Activated CD4-positive, alpha-beta memory T cell treated with anti-CD3 and anti-CD28 coated beads for 36 hours (primary cell): ENCODE measurements at regions of chr10 and their contacts with region 1.

Region 1: GRCh38 chr10:96586419-96587263 is at the start of gene TM9SF3:
- DNase-seq: peak; percentile 95
- H3K4me3 Mint-ChIP-seq: peak within 1 kb of the TSS; percentile 97
- H3K27ac Mint-ChIP-seq: peak within 1 kb of the TSS; percentile 95
- H3K4me1 Mint-ChIP-seq: peaks cover 33% of the 10 kb centered on the region
- H3K27me3 Mint-ChIP-seq: peaks cover 6% of the 10 kb centered on the region
- total RNA-seq, gene TM9SF3: 75.6 to 79.7 TPM

Region 2: DNA sequence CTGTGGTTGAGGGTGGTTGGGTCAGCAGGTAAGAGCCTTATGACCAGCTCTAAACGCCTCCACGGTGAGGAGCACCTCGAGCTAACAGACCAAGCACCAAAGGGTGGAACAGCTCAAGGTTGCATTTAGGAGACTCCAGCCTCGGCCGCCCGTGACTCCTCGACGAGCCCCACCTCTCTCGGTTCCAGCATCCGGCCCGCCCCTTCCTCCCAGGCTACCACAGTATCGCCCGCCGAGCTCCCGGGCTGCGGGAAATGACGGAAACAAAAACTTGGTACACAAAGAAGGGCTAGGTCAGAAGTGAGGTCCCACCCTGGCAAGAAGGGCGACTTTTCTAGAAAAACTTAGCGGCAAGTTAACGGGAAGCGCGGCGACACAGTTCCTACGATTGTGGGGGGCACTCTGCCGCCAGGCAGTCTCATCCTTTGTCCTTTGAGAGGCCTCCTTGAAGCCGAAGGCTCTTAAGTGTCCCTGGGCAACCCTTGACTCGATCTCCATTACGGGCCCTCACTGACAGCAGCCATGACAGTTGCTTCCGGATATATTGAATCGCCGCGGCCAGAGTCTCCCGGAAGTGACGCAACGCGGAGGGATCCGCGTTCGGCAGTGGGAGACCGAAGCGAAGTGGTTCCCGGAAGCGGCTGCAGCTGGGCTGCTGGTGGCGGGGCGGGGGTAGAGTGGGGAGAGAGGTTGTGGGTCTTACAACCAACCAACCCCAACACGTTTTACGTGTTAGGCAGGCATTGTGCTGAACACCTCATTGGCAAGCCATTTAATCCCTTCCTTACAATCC is 496.8 kb before region 1 on chr10:
- CTCF ChIA-PET with region 1: no interaction called
- POLR2A ChIA-PET with region 1: no interaction called
- intact Hi-C with region 1: loop called (anchors 5 kb)
- DNase-seq: peak; percentile 95
- H3K4me3 Mint-ChIP-seq: peak overlapping the region; percentile 95
- H3K27ac Mint-ChIP-seq: peak overlapping the region; percentile 99
- H3K4me1 Mint-ChIP-seq: peaks cover 12% of the 10 kb centered on the region
- H3K27me3 Mint-ChIP-seq: peaks cover 15% of the 10 kb centered on the region

Region 3: GRCh38 chr10:96565774-96566173 is 20.9 kb before region 1 on chr10:
- CTCF ChIA-PET with region 1: interaction called, 4 read pairs
- POLR2A ChIA-PET with region 1: interaction called, 3 read pairs
- intact Hi-C with region 1: loop called (anchors 2 kb)
- DNase-seq: no peak
- H3K4me3 Mint-ChIP-seq: no peak overlapping the region
- H3K27ac Mint-ChIP-seq: no peak overlapping the region
- H3K4me1 Mint-ChIP-seq: peaks cover 35% of the 10 kb centered on the region
- H3K27me3 Mint-ChIP-seq: no peaks in the 10 kb centered on the region

Region 4: DNA sequence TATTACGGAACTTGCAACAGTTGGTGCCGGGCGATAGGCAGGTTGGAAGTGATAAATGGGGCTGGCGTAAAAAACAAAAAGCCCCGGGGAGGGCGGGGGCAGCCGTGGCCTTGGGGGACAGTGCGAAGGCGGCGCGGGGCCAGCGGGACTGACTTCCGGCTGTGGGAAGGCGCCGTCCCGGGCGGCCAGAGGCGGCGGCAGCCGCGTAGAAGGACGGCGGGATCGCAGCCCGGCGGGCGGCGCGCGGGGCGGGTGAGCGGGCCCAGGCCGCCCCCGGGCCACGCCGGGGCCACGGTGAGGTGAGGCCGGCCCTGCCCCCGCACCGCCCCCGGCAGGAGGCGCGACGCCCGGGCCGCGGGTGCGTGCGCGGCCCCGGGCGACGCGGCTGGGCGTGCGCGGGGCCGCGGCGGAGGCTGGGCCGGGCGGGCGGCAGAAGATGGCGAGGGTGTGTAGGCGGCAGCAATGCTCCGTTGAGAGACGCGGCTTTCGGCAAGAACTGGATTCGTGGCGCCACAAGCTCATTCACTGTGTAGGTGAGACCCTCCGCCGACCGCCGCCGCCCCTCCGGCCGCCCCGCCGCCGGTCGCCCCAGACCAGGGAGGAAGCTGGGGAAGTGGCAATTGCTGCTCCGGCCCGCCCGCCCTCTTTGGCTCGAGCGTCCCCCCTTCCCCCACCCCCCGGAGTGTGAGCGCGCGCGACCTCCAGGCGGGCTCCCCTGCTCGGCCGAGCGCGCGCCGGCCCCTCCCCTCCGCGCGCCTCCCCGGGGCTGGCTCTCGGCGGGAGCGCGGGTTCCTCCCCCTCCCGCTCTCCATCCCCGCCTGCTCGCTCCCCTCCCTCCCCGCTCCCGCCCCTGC is 245.5 kb after region 1 on chr10 and contains the start of gene LCOR:
- CTCF ChIA-PET with region 1: interaction called, 3 read pairs
- POLR2A ChIA-PET with region 1: no interaction called
- intact Hi-C with region 1: loop called (anchors 1 kb)
- DNase-seq: peak; percentile 87
- H3K4me3 Mint-ChIP-seq: peak within 1 kb of the TSS; percentile 88
- H3K27ac Mint-ChIP-seq: peak within 1 kb of the TSS; percentile 97
- H3K4me1 Mint-ChIP-seq: peaks cover 48% of the 10 kb centered on the region
- H3K27me3 Mint-ChIP-seq: no peaks in the 10 kb centered on the region
- total RNA-seq, gene LCOR: 15.0 to 18.2 TPM

Region 5: DNA sequence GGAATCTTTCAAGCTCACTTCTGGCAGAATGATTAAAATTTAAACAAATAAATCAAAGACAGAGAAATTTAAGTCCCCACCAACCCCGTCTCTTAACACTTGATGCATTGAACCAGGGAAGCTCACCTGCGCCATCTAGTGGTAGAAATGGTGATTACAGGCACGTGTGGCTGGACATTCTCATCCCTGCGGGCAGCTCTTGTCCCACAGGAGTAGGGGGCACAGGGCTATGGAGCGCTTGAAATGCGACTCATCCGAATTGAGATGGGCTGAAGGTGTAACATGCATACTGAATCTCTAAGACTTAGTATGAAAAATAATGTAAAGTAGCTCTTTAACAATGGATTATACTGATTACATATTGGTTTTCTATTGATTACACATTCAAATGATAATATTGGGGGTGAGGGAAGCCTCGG is 623.9 kb after region 1 on chr10:
- CTCF ChIA-PET with region 1: interaction called, 3 read pairs
- POLR2A ChIA-PET with region 1: no interaction called
- intact Hi-C with region 1: loop called (anchors 10 kb)
- DNase-seq: peak; percentile 81
- H3K4me3 Mint-ChIP-seq: no peak overlapping the region
- H3K27ac Mint-ChIP-seq: no peak overlapping the region
- H3K4me1 Mint-ChIP-seq: no peaks in the 10 kb centered on the region
- H3K27me3 Mint-ChIP-seq: no peaks in the 10 kb centered on the region